HepG2 (cell line): ENCODE measurements at regions of chr10 and their contacts with region 1.

Region 1: GRCh38 chr10:120948889-120949608 is 97.9 kb downstream of the WDR11 start:
- DNase-seq: peak; percentile 21
- ATAC-seq: peak; percentile 99
- H3K4me3 ChIP-seq: peak overlapping the region in 2 of 3 experiments; percentile 5 to 42; a peak in 1 of 6 replicates
- H3K27ac ChIP-seq: no peak overlapping the region
- H3K4me1 ChIP-seq: no peaks in the 10 kb centered on the region
- H3K27me3 ChIP-seq: peaks cover 0 to 11% of the 10 kb centered on the region in 2 experiments; a peak in 3 of 5 replicates
- CTCF ChIP-seq: peak; percentile 89
- EP300 ChIP-seq: no peak
- POLR2A ChIP-seq: no peak
- RAD21 ChIP-seq: peak; percentile 97

Region 2: DNA sequence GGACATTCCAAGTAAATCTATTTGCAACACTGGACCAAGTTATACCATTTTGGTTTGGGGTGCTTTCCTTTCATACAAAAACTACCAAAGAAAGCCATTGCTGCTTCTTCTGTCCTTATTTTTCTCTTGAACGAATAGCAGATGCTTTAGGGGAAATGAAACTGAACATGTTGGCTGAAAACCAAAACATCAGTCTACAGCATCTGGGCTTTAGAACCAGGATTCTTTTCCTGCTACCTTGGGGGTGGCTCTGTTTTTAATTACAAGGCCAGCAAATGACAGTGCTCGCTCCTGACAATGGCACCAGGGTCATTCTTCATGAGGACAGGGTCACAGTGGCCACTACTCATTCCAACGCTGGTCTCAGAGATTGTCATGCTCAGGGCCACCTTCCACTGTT is 17.6 kb before region 1 on chr10:
- CTCF ChIA-PET with region 1: no interaction called
- POLR2A ChIA-PET with region 1: no interaction called
- in situ Hi-C with region 1: no loop called
- intact Hi-C with region 1: no loop called
- DNase-seq: no peak
- ATAC-seq: no peak
- H3K4me3 ChIP-seq: no peak overlapping the region
- H3K27ac ChIP-seq: no peak overlapping the region
- H3K4me1 ChIP-seq: no peaks in the 10 kb centered on the region
- H3K27me3 ChIP-seq: peaks cover 1 to 9% of the 10 kb centered on the region in 2 experiments; a peak in 3 of 5 replicates
- CTCF ChIP-seq: no peak
- EP300 ChIP-seq: no peak
- POLR2A ChIP-seq: no peak
- RAD21 ChIP-seq: no peak

Region 3: DNA sequence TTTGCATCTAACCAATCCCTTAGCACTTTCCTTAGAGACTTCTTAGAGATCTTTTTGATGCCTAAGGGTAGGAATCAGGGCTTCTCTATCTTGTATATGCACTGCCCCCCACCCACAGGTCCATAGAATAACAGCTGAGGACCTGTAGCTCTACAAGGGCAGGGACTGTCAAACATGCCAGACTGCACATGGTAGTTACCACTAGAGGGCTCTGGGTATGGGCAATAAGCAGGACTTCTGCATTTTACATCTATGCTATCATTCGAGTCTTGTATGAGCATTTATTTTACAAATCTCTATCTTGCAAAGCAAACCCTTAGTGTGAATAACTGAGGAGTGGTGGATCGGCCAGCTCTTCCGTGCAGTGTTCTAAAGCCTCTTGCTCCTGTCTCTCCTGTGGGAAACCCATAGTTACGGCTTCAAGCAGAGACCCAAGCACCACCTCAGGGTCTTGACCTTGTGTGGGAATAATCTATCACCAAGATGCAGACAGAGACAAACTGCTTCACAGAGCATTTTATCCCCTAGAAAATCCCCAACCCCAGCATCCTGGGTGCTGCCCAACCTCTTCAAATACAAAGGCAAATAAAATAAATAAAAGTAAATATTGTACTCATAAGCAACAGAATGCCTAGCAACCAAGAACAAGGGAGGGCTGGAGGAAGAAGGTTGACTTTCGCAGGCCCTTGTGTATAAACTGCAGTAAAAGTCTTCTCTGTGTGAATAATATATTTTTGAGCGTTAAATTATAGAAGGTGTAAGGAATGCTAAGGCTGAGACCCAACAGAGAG is 121.4 kb after region 1 on chr10:
- CTCF ChIA-PET with region 1: no interaction called
- POLR2A ChIA-PET with region 1: no interaction called
- in situ Hi-C with region 1: no loop called
- intact Hi-C with region 1: loop called (anchors 5 kb)
- DNase-seq: peak; percentile 46
- ATAC-seq: peak; percentile 81
- H3K4me3 ChIP-seq: no peak overlapping the region
- H3K27ac ChIP-seq: no peak overlapping the region
- H3K4me1 ChIP-seq: peaks cover 5% of the 10 kb centered on the region
- H3K27me3 ChIP-seq: no peaks in the 10 kb centered on the region
- CTCF ChIP-seq: peak; percentile 47
- EP300 ChIP-seq: no peak
- POLR2A ChIP-seq: no peak
- RAD21 ChIP-seq: peak; percentile 32; the same call in 1 of the 2 replicates

Region 4: GRCh38 chr10:121608469-121609190 is 659.6 kb after region 1 on chr10:
- CTCF ChIA-PET with region 1: interaction called, 9 read pairs
- POLR2A ChIA-PET with region 1: no interaction called
- in situ Hi-C with region 1: loop called (anchors 5 kb)
- intact Hi-C with region 1: no loop called
- DNase-seq: peak; percentile 13
- ATAC-seq: peak; percentile 92
- H3K4me3 ChIP-seq: peak overlapping the region; percentile 8 to 64 (median 38); a peak in 4 of 6 replicates
- H3K27ac ChIP-seq: no peak overlapping the region
- H3K4me1 ChIP-seq: peaks cover 24% of the 10 kb centered on the region
- H3K27me3 ChIP-seq: peaks cover 0 to 2% of the 10 kb centered on the region in 2 experiments; a peak in 3 of 5 replicates
- CTCF ChIP-seq: peak; percentile 82
- EP300 ChIP-seq: no peak
- POLR2A ChIP-seq: no peak
- RAD21 ChIP-seq: peak; percentile 91